ENCODE measurements at regions of chr16 and their contacts with region 1.

Region 1: GRCh38 chr16:23323224-23324030 is 21.3 kb downstream of the SCNN1B start:
- DNase-seq: no peak
- ATAC-seq: peak; percentile 34
- H3K4me3 Mint-ChIP-seq: no peak overlapping the region
- H3K27ac Mint-ChIP-seq: no peak overlapping the region
- H3K4me1 Mint-ChIP-seq: peaks cover 10% of the 10 kb centered on the region
- H3K27me3 Mint-ChIP-seq: no peaks in the 10 kb centered on the region
- CTCF ChIP-seq: no peak

Region 2: DNA sequence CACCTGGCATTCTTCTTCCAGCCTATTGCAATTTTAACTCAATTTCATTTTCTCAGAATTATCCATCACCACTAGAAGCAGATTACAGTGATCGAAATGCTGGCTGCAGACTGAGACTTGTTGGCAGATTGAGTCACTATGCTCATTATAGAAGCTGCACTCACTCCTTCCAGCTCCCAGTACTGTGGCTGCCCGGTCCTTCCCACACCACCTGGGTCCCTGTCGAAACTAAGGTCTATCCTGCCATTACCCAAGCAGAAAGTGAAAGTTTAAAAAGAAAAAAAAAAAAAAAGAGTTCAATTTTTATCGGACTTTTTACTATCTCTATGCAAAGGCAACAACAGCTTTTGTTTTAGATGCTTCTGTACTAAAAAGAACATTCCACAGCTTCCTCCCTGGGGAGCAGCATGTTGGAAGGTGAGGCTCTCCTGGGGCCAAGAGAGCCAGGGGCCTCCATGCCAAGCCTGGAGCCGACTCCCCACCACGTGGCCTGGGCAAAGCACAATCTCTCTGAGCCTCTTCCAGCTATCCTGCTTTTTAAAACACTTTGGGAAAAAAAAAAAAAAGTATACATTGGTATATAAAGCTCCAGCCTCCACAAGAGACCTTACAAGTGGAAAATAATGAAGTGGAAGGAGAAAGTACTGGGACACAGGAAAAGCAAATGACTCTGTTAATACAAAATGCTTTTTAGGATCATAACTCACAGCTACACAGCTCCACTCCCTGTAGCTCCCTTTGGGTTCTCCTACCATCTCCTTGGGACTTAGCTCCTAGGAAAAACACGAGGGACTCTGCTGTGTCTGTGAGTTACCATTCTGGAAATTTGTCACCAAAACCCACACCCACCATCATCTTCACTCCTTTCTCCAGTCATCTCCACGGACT is 252.0 kb before region 1 on chr16:
- CTCF ChIA-PET with region 1: no interaction called
- POLR2A ChIA-PET with region 1: no interaction called
- intact Hi-C with region 1: no loop called
- DNase-seq: no peak
- ATAC-seq: no peak
- H3K4me3 Mint-ChIP-seq: no peak overlapping the region
- H3K27ac Mint-ChIP-seq: no peak overlapping the region
- H3K4me1 Mint-ChIP-seq: no peaks in the 10 kb centered on the region
- H3K27me3 Mint-ChIP-seq: no peaks in the 10 kb centered on the region
- CTCF ChIP-seq: no peak

Region 3: GRCh38 chr16:23274969-23275368 is 48.5 kb before region 1 on chr16:
- CTCF ChIA-PET with region 1: no interaction called
- POLR2A ChIA-PET with region 1: no interaction called
- intact Hi-C with region 1: no loop called
- DNase-seq: no peak
- ATAC-seq: no peak
- H3K4me3 Mint-ChIP-seq: no peak overlapping the region
- H3K27ac Mint-ChIP-seq: no peak overlapping the region
- H3K4me1 Mint-ChIP-seq: no peaks in the 10 kb centered on the region
- H3K27me3 Mint-ChIP-seq: peaks cover 29% of the 10 kb centered on the region
- CTCF ChIP-seq: no peak

Region 4: GRCh38 chr16:23334457-23334853 is 11.0 kb after region 1 on chr16:
- CTCF ChIA-PET with region 1: no interaction called
- POLR2A ChIA-PET with region 1: interaction called, 6 read pairs
- intact Hi-C with region 1: loop called (anchors 1 kb)
- DNase-seq: no peak
- ATAC-seq: peak; percentile 30
- H3K4me3 Mint-ChIP-seq: no peak overlapping the region
- H3K27ac Mint-ChIP-seq: peak overlapping the region; percentile 24
- H3K4me1 Mint-ChIP-seq: peaks cover 28% of the 10 kb centered on the region
- H3K27me3 Mint-ChIP-seq: no peaks in the 10 kb centered on the region
- CTCF ChIP-seq: no peak

Measured in activated B cell treated with CpG ODN at 0.5 μM for 24 hours (primary cell).